ENCODE measurements at regions of chr1 and their contacts with region 1.

Region 1: GRCh38 chr1:230240446-230241086 is 173.5 kb downstream of the GALNT2 start:
- DNase-seq: no peak
- H3K4me3 Mint-ChIP-seq: no peak overlapping the region
- H3K27ac Mint-ChIP-seq: peak overlapping the region; percentile 79
- H3K4me1 Mint-ChIP-seq: peaks cover 24% of the 10 kb centered on the region
- H3K27me3 Mint-ChIP-seq: no peaks in the 10 kb centered on the region

Region 2: GRCh38 chr1:230208619-230209261 is 31.8 kb before region 1 on chr1:
- CTCF ChIA-PET with region 1: interaction called, 3 read pairs
- POLR2A ChIA-PET with region 1: no interaction called
- intact Hi-C with region 1: loop called (anchors 1 kb)
- DNase-seq: peak; percentile 74
- H3K4me3 Mint-ChIP-seq: peak overlapping the region; percentile 41
- H3K27ac Mint-ChIP-seq: peak overlapping the region; percentile 92
- H3K4me1 Mint-ChIP-seq: peaks cover 50% of the 10 kb centered on the region
- H3K27me3 Mint-ChIP-seq: no peaks in the 10 kb centered on the region

Region 3: GRCh38 chr1:230270559-230271281 is 30.2 kb after region 1 on chr1:
- CTCF ChIA-PET with region 1: no interaction called
- POLR2A ChIA-PET with region 1: no interaction called
- intact Hi-C with region 1: loop called (anchors 1 kb)
- DNase-seq: peak; percentile 51
- H3K4me3 Mint-ChIP-seq: no peak overlapping the region
- H3K27ac Mint-ChIP-seq: peak overlapping the region; percentile 84
- H3K4me1 Mint-ChIP-seq: peaks cover 25% of the 10 kb centered on the region
- H3K27me3 Mint-ChIP-seq: no peaks in the 10 kb centered on the region

Region 4: GRCh38 chr1:230303822-230304221 is 63.3 kb after region 1 on chr1:
- CTCF ChIA-PET with region 1: interaction called, 3 read pairs
- POLR2A ChIA-PET with region 1: no interaction called
- intact Hi-C with region 1: loop called (anchors 2 kb)
- DNase-seq: no peak
- H3K4me3 Mint-ChIP-seq: no peak overlapping the region
- H3K27ac Mint-ChIP-seq: no peak overlapping the region
- H3K4me1 Mint-ChIP-seq: peaks cover 25% of the 10 kb centered on the region
- H3K27me3 Mint-ChIP-seq: peaks cover 2% of the 10 kb centered on the region

Region 5: DNA sequence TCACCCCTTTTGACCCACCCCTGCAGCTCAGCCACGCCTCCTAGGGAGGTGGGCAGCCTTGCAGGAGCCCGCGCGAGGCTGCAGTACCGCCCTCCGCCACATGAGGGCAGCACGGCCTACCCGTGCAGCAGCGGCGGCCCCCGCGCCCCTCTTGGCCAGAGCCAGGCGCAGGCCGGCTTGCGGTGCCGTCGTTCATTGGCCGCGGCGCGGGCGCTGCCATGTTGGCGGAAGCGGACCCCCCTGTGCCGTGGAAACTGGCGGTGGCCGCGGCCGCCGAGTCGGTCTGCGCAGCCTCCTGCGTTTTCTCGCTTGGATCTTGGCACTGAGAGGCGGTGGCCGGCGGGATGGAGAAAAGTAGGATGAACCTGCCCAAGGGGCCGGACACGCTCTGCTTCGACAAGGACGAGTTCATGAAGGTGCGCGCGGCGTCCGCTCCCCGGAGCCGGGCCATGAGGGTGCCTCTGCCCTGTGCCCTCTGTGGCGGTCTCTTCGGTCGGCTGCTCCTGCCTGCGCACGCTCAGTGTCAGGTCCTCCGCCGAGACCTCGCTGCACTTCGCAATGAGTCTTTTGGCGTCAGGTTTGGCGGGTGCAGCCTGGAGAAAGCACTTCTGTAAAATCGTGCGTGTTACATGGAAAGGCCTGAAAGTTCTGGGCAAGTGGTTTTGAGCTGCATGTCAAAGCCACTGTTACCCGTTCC is 401.8 kb after region 1 on chr1 and contains the start of gene COG2:
- CTCF ChIA-PET with region 1: no interaction called
- POLR2A ChIA-PET with region 1: no interaction called
- intact Hi-C with region 1: loop called (anchors 2 kb)
- DNase-seq: peak; percentile 96
- H3K4me3 Mint-ChIP-seq: peak within 1 kb of the TSS; percentile 98
- H3K27ac Mint-ChIP-seq: peak within 1 kb of the TSS; percentile 92
- H3K4me1 Mint-ChIP-seq: peaks cover 46% of the 10 kb centered on the region
- H3K27me3 Mint-ChIP-seq: peaks cover 14% of the 10 kb centered on the region
- total RNA-seq, gene COG2: 29.6 to 32.3 TPM

Measured in activated CD4-positive, alpha-beta memory T cell treated with anti-CD3 and anti-CD28 coated beads for 36 hours (primary cell).